PC-3 (cell line): ENCODE measurements at regions of chr2 and their contacts with region 1.

Region 1: GRCh38 chr2:8004250-8004681 is 677.6 kb upstream of the ID2 start:
- DNase-seq: peak; percentile 48
- ATAC-seq: peak; percentile 13; the same call in 1 of the 2 replicates
- H3K4me3 ChIP-seq: no peak overlapping the region
- H3K27ac ChIP-seq: peak overlapping the region; percentile 60
- H3K4me1 ChIP-seq: peaks cover 22% of the 10 kb centered on the region
- H3K27me3 ChIP-seq: no peaks in the 10 kb centered on the region
- CTCF ChIP-seq: no peak

Region 2: DNA sequence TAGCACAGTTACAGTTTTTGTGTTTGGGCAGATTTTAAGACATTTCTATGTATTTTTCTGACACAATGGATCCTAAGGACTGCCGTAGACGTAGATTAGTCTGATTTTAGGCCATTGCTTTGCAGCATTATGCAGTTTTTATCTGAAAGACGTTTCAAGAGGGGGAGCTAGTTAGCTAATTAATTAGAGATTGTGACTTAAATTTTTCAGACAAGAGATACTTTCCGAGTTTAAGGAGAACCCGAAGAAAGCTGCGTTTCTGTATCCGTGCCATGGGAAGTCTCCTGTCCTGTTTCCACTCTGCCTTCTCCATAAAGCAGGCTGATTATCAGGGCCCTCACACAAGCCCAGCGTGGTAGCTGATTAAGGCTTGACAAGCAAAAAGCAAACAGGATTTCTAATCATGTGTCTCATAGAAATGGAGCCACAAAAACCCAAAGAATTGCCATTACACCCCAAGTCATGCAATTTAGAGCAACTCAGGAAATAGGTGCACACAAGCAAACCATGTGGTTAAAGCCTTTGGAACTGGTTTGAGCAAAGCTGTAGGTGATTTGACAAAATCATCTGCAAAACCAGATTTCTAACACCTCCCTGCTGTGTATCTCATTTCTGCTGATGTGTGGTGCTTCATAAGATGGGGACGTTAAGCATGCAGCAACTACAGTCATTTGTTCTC is 279.0 kb before region 1 on chr2:
- CTCF ChIA-PET with region 1: no interaction called
- POLR2A ChIA-PET with region 1: no interaction called
- intact Hi-C with region 1: loop called (anchors 1 kb)
- DNase-seq: peak; percentile 28
- ATAC-seq: peak; percentile 49
- H3K4me3 ChIP-seq: no peak overlapping the region
- H3K27ac ChIP-seq: no peak overlapping the region
- H3K4me1 ChIP-seq: peaks cover 4% of the 10 kb centered on the region; the same call in 1 of the 2 replicates
- H3K27me3 ChIP-seq: no peaks in the 10 kb centered on the region
- CTCF ChIP-seq: peak; percentile 47